PC-3 (cell line): ENCODE measurements at regions of chr12 and their contacts with region 1.

Region 1: DNA sequence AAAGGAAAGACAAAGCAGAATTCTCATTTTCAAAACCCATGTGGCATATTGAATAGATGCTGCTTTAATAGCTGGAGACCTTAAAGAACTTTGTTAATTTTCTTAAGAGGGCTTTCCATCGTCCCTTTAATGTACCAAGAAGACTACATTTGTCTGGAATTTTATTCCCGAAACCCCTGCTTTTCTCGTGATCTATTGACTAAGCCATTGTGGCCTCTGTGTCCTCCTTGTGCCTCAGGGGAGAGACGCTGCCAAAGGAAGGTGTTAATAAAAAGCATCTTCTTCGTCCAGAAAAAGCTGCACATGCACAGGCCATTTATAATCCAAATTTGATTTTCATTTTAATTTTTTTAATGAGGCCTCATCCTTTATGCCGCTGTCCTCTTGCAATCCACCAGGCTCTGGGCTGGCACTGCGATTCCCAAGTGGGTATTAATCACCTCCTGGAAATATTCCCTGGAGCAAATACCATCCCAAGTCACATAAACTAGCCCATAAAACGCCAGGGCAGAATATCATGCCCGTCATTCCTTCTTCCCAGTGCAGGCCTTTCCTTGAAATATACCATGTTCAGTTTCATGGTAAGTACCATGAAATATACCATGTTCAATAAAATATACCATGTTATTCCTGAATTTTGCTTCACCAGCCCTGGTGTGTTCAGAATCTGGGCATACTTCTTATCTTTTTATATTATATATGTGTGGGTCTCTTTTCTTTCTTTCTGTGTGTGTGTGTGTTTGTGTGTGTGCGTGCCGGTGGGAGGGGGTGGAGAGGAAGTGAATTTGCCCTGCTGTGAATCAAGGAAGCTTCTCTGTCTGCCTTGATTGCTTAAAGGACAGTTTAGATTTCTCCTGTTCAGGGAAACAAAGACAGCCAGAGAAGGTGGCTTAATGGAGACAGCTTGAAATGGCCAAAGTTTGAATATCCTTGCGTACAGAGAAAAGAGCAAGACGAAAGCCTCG is 147.6 kb downstream of the PHETA1 start:
- DNase-seq: peak; percentile 11
- ATAC-seq: peak; percentile 60
- H3K4me3 ChIP-seq: no peak overlapping the region
- H3K27ac ChIP-seq: no peak overlapping the region
- H3K4me1 ChIP-seq: no peaks in the 10 kb centered on the region
- H3K27me3 ChIP-seq: peaks cover 25% of the 10 kb centered on the region
- CTCF ChIP-seq: no peak

Region 2: DNA sequence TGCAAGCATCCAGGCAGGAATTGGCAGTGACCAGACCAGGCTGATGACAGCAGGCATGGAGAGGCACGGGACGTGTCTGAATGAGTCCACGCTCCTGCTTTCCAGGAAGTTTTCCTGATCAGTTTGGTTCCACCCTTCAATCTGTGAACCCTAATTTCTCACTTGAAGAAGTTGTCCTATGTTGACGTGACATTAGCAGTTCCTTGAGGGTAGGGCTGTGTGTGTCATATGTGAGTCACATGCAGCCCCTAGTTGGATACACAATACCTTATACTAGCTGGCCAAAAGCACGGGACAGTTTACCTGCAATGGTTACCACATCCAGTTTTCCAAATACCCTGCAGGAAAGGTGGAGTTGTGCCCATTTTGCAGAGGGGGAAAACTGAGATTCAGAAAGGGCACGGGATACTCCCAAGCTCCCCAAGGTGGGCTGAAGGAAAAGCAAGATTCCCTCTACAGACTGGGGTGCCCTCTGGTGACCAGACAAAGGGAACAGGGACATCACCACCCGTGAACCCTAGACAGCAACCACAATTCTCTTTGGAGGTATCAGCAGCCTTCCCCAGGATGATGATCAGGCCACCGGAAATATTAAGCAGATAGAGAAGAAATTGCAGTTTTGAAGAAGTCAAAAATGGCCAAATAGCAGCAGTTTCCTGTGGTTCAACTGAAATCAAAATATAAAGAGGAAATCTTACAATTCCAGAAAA is 46.9 kb before region 1 on chr12:
- CTCF ChIA-PET with region 1: no interaction called
- POLR2A ChIA-PET with region 1: interaction called, 10 read pairs
- intact Hi-C with region 1: no loop called
- DNase-seq: peak; percentile 62
- ATAC-seq: peak; percentile 57
- H3K4me3 ChIP-seq: no peak overlapping the region
- H3K27ac ChIP-seq: no peak overlapping the region
- H3K4me1 ChIP-seq: peaks cover 8% of the 10 kb centered on the region
- H3K27me3 ChIP-seq: peaks cover 40% of the 10 kb centered on the region
- CTCF ChIP-seq: peak; percentile 59